ENCODE measurements at regions of chr3 and their contacts with region 1.

Region 1: GRCh38 chr3:27134165-27134796 is 234.9 kb downstream of the NEK10 start:
- DNase-seq: peak in 1 of 2 donors; percentile 68
- H3K4me3 ChIP-seq: no peak overlapping the region
- H3K27ac ChIP-seq: no peak overlapping the region
- H3K4me1 ChIP-seq: no peaks in the 10 kb centered on the region
- H3K27me3 ChIP-seq: no peaks in the 10 kb centered on the region
- CTCF ChIP-seq: peak; percentile 66 to 89 (median 70)

Region 2: DNA sequence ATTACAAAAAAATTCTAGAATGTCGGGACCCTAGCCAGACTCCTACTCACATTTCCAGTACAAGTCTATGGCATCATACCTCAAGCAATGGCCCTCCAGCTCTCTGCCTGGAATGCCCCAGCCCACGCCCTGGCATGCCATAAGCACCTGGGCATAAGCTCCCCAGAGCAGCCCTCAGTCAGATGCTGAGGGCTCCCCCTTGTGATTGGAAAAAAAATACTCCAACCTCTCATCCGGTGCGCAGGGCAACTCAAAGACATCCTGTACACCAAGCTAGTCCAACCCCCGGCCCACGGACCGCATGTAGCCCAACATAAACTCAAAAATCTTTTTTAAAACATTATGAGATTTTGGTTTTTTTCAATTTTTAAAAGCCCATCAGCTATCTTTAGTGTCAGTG is 119.5 kb after region 1 on chr3:
- intact Hi-C with region 1: loop called (anchors 5 kb)
- DNase-seq: no peak
- H3K4me3 ChIP-seq: no peak overlapping the region
- H3K27ac ChIP-seq: no peak overlapping the region
- H3K4me1 ChIP-seq: no peaks in the 10 kb centered on the region
- H3K27me3 ChIP-seq: no peaks in the 10 kb centered on the region
- CTCF ChIP-seq: peak in 1 of 3 experiments; percentile 12

Region 3: GRCh38 chr3:27279123-27279522 is 144.8 kb after region 1 on chr3:
- intact Hi-C with region 1: loop called (anchors 1 kb)
- DNase-seq: no peak
- H3K4me3 ChIP-seq: no peak overlapping the region
- H3K27ac ChIP-seq: no peak overlapping the region
- H3K4me1 ChIP-seq: no peaks in the 10 kb centered on the region
- H3K27me3 ChIP-seq: no peaks in the 10 kb centered on the region
- CTCF ChIP-seq: peak in 1 of 3 experiments; percentile 43

Measured in ascending aorta (tissue), 2 donors.